K562 (cell line): ENCODE measurements at regions of chr14 and their contacts with region 1.

Region 1: GRCh38 chr14:99915305-99916090 is 122.3 kb downstream of the EML1 start:
- DNase-seq: no peak
- ATAC-seq: no peak
- H3K4me3 ChIP-seq: no peak overlapping the region
- H3K27ac ChIP-seq: no peak overlapping the region
- H3K4me1 ChIP-seq: no peaks in the 10 kb centered on the region; a peak in 1 of 5 replicates
- H3K27me3 ChIP-seq: peaks cover 13 to 49% of the 10 kb centered on the region in 2 experiments; a peak in 4 of 5 replicates
- CTCF ChIP-seq: no peak
- EP300 ChIP-seq: no peak
- POLR2A ChIP-seq: no peak
- RAD21 ChIP-seq: no peak

Region 2: GRCh38 chr14:99904506-99904905 is 11.0 kb before region 1 on chr14:
- CTCF ChIA-PET with region 1: no interaction called
- POLR2A ChIA-PET with region 1: interaction called, 10 read pairs
- in situ Hi-C with region 1: no loop called
- intact Hi-C with region 1: no loop called
- DNase-seq: no peak
- ATAC-seq: no peak
- H3K4me3 ChIP-seq: no peak overlapping the region
- H3K27ac ChIP-seq: no peak overlapping the region
- H3K4me1 ChIP-seq: peaks cover 0 to 4% of the 10 kb centered on the region in 2 experiments; a peak in 1 of 5 replicates
- H3K27me3 ChIP-seq: peaks cover 2 to 7% of the 10 kb centered on the region in 2 experiments; a peak in 2 of 5 replicates
- CTCF ChIP-seq: no peak
- EP300 ChIP-seq: no peak
- POLR2A ChIP-seq: no peak
- RAD21 ChIP-seq: no peak

Region 3: DNA sequence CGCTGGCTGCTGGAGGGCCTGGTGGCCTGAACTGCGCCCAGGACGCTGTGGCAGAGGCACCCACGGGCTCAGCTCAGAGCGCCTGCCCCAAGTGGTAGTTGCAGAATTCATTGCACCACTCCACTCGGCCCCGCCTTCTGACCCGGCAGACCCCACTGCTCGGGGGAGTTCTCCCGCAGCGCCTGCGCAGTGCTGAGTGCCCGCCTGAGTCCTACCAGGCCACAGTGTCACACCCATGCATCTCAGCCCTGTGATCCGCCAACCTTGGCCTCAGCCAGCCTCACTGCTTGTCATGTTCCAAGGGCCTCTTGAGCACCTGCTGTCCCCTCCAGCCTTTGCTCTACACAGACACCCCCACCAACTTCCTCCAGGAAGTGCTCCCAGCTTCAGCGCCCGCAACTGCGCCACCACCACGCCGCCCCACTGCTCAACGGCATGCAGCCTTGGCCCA is 231.7 kb after region 1 on chr14:
- CTCF ChIA-PET with region 1: no interaction called
- POLR2A ChIA-PET with region 1: no interaction called
- in situ Hi-C with region 1: no loop called
- intact Hi-C with region 1: no loop called
- DNase-seq: no peak
- ATAC-seq: no peak
- H3K4me3 ChIP-seq: no peak overlapping the region
- H3K27ac ChIP-seq: no peak overlapping the region
- H3K4me1 ChIP-seq: peaks cover 13 to 78% of the 10 kb centered on the region in 2 experiments
- H3K27me3 ChIP-seq: no peaks in the 10 kb centered on the region
- CTCF ChIP-seq: no peak
- EP300 ChIP-seq: no peak
- POLR2A ChIP-seq: no peak
- RAD21 ChIP-seq: no peak